ENCODE measurements at regions of chr1 and their contacts with region 1.

Region 1: DNA sequence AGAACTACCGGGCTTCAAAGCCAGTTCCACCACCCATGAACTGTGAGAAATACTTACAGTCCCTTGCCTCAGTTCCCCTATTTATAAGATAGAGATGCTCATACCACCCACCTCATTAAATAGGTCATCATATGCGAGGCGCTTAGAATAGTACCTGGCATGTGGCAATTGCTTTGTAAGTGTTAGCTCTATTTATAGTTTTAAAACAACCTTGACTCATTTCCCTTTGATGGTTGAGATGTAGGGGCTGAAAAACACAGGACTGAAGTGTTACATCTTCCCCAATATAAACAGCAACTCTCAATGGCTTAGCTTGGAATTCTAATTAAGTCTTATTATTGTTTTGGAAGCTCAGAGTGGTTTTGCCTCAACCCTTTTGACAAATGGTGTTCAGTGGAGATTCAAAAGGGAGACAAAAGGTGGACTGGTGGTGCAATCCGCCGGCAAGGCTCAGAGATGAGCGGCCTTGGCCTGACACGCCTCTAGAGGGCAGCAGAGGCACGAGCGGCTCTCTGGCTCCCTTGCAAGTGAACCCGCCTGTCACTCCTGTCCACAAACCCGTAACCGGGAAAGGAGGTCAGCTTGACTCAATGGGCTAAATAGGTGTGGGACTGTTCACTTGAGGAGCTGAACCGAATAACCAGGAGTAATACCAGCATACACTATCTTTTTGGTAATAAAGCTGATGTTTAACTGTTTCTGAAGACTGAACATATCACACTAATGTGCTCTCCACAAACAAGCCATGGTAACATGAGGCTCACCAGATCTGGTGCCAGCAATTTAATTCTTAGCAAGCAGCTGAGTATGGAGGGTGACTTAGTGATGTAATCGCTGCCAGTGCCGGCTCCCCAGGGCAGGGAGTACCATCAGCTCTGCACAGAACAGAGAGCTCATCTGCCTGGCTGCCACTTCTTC is 19.5 kb upstream of the SMYD2 start:
- DNase-seq: peak; percentile 87 to 89 (median 88)
- H3K4me3 ChIP-seq: no peak overlapping the region
- H3K27ac ChIP-seq: no peak overlapping the region
- H3K4me1 ChIP-seq: no peaks in the 10 kb centered on the region
- H3K27me3 ChIP-seq: no peaks in the 10 kb centered on the region
- CTCF ChIP-seq: peak; percentile 93

Region 2: DNA sequence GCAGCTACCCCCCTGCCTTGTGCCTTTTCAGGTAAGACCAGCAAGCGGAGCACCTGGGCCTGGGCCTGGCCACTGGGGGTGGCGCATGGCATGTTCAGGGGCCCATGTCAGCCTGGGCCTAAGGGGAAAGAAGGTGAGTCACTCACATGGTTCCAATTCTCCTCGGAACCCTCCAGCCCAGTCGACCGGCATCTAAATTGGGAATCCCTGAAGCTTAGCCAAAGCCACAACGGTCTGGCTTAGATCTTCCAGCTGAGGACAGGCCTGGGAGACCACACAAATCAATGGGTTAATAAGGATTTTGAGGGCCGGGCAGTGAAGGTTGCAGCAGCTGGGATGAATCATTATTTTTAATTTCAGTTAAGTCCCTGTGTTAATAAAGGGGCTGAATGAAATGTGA is 125.6 kb before region 1 on chr1:
- intact Hi-C with region 1: no loop called
- DNase-seq: peak in 2 of 5 donors; percentile 16 to 33
- H3K4me3 ChIP-seq: no peak overlapping the region
- H3K27ac ChIP-seq: no peak overlapping the region
- H3K4me1 ChIP-seq: no peaks in the 10 kb centered on the region
- H3K27me3 ChIP-seq: no peaks in the 10 kb centered on the region
- CTCF ChIP-seq: no peak

Region 3: DNA sequence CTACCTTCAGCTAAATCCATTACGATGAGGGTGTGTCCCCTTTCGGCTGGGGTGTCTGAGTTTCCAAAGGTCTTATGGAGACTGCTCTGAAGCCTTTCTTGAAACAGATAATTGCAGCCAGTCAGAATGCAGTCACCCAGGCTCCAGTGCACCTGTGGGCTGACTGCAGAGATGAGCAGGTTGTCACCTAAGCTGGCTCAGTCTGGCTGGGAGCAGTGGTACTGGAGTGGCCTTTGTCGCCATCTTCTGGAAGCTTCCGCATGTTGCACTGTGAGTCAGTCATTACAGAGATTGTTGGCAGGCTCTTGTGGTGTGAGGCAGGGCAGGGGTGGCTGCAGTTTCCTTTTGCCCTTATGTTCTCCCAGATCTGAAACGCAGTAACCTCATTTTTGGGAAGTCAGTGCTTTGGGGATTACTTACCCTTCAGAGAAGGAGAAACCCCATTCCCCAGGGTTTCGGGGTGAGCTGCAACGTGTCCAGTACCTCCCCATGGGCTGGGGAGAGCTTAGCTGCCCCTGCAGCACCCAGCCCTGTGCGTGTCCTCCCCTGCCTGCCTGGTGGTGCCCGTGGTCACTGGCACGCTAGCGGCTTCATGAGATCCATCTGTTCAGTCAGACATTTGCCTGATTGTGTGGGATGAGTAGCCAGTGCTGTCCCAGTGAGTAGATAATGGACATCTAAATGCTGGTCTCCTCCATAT is 67.5 kb after region 1 on chr1:
- intact Hi-C with region 1: loop called (anchors 5 kb)
- DNase-seq: peak; percentile 87 to 90 (median 87)
- H3K4me3 ChIP-seq: no peak overlapping the region
- H3K27ac ChIP-seq: no peak overlapping the region
- H3K4me1 ChIP-seq: no peaks in the 10 kb centered on the region
- H3K27me3 ChIP-seq: no peaks in the 10 kb centered on the region
- CTCF ChIP-seq: peak; percentile 96